ENCODE measurements at regions of chr2 and their contacts with region 1.

Region 1: GRCh38 chr2:237572021-237572741 is 5.8 kb downstream of the PRLH start:
- DNase-seq: peak; percentile 97
- ATAC-seq: peak; percentile 91
- H3K4me3 Mint-ChIP-seq: no peak overlapping the region
- H3K27ac Mint-ChIP-seq: peak overlapping the region; percentile 24; the same call in 1 of the 2 replicates
- H3K4me1 Mint-ChIP-seq: peaks cover 41% of the 10 kb centered on the region
- H3K27me3 Mint-ChIP-seq: no peaks in the 10 kb centered on the region
- CTCF ChIP-seq: peak; percentile 96

Region 2: GRCh38 chr2:237165405-237166276 is 406.5 kb before region 1 on chr2:
- CTCF ChIA-PET with region 1: interaction called, 13 read pairs
- POLR2A ChIA-PET with region 1: no interaction called
- DNase-seq: peak; percentile 41
- ATAC-seq: peak; percentile 89
- H3K4me3 Mint-ChIP-seq: no peak overlapping the region
- H3K27ac Mint-ChIP-seq: no peak overlapping the region
- H3K4me1 Mint-ChIP-seq: peaks cover 10% of the 10 kb centered on the region
- H3K27me3 Mint-ChIP-seq: no peaks in the 10 kb centered on the region; the same call in none of the 2 replicates
- CTCF ChIP-seq: peak; percentile 39

Region 3: DNA sequence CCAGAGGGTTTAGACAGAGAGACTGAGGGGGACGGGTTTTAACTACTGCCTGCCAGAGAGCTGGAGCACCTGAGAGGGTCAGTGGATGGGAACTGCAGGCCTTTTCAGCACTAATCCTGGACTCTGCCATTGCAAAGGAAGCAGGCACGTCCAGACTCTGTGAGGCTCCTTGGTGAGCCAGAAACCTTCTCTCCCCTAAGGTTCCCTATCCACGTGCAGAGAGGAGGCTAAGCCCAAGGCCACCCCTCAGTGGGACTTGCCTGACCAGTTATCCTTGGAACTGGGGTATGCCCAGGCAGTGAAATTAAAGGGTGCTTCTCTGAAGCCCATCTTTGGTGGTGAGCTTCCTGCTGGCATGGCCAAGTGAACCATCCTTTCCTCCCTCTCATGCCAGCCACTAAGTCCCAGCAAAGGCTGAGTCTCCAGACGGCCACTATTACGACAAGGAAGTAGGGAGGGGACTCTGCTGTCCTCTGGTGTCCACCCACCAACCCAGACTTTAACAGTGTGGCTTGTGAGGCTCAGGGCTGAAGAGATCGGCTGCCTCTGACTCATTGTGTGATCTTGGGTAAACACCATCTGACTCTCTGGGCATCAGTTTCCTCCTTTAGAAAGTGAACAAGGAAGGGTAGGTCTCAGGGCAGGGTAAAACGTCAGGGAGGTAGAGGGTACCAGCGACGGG is 89.0 kb before region 1 on chr2:
- CTCF ChIA-PET with region 1: interaction called, 15 read pairs
- POLR2A ChIA-PET with region 1: no interaction called
- DNase-seq: no peak
- ATAC-seq: no peak
- H3K4me3 Mint-ChIP-seq: no peak overlapping the region
- H3K27ac Mint-ChIP-seq: no peak overlapping the region
- H3K4me1 Mint-ChIP-seq: peaks cover 16% of the 10 kb centered on the region
- H3K27me3 Mint-ChIP-seq: peaks cover 84% of the 10 kb centered on the region
- CTCF ChIP-seq: no peak

Region 4: GRCh38 chr2:237529452-237530402 is 42.5 kb before region 1 on chr2:
- CTCF ChIA-PET with region 1: interaction called, 11 read pairs
- POLR2A ChIA-PET with region 1: no interaction called
- DNase-seq: no peak
- ATAC-seq: no peak
- H3K4me3 Mint-ChIP-seq: no peak overlapping the region
- H3K27ac Mint-ChIP-seq: no peak overlapping the region
- H3K4me1 Mint-ChIP-seq: peaks cover 14% of the 10 kb centered on the region
- H3K27me3 Mint-ChIP-seq: peaks cover 6% of the 10 kb centered on the region; the same call in 1 of the 2 replicates
- CTCF ChIP-seq: no peak

Region 5: DNA sequence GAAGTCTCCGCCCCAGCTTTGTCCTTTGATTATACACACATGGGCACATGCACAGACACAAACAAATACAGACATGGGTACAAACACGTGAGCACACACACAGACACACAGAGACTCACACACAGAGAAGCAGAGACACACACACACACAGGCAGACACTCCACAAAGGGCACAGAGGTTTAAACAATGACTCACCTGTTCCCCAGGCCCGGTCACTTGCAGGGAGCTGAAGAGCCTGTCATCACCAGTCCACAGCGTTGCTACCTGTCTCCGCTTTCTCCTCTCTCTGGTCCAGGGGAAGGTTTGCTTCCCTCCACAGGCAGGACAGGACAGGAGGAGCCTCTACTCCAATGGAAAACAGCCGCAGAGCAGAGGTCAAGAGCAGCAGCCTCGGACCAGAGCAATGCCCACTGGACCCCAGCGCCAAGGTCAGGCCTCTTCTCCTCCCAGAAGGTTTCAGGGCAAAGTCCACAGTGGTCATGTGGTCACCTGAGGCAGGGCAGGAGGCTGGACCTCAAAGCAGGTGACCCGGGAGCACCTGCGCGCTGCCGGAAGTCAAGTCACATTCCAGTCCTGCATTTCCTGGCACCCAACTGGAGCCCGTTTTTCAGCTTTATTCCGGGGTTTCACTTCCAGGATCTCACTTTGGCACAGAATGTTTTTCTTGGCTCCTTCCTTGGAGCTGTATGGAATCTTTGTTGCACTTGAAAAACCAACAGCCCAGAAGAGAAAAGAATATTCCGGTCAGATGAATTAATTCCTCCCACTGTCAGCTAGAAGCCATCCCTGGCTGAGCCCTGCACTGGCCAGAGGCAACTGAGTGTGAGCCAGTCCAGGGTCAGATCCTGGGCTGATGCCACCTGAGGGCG is 18.3 kb after region 1 on chr2 and contains the start of gene RAB17:
- CTCF ChIA-PET with region 1: interaction called, 69 read pairs
- POLR2A ChIA-PET with region 1: interaction called, 4 read pairs
- DNase-seq: peak; percentile 51
- ATAC-seq: peak; percentile 69
- H3K4me3 Mint-ChIP-seq: peak within 1 kb of the TSS; percentile 83
- H3K27ac Mint-ChIP-seq: peak within 1 kb of the TSS; percentile 76
- H3K4me1 Mint-ChIP-seq: peaks cover 88% of the 10 kb centered on the region
- H3K27me3 Mint-ChIP-seq: no peaks in the 10 kb centered on the region
- CTCF ChIP-seq: no peak
- total RNA-seq, gene RAB17: 134 to 140 TPM (median 137 TPM) in 3 replicates

Region 6: GRCh38 chr2:237674731-237675276 is 102.6 kb after region 1 on chr2:
- CTCF ChIA-PET with region 1: interaction called, 16 read pairs
- POLR2A ChIA-PET with region 1: no interaction called
- DNase-seq: peak; percentile 70
- ATAC-seq: peak; percentile 91
- H3K4me3 Mint-ChIP-seq: no peak overlapping the region; the same call in 1 of the 2 replicates
- H3K27ac Mint-ChIP-seq: peak overlapping the region; percentile 85
- H3K4me1 Mint-ChIP-seq: peaks cover 50% of the 10 kb centered on the region
- H3K27me3 Mint-ChIP-seq: no peaks in the 10 kb centered on the region
- CTCF ChIP-seq: no peak

Measured in WTC11 (cell line).